MCF 10A (cell line): ENCODE measurements at regions of chr7 and their contacts with region 1.

Region 1: DNA sequence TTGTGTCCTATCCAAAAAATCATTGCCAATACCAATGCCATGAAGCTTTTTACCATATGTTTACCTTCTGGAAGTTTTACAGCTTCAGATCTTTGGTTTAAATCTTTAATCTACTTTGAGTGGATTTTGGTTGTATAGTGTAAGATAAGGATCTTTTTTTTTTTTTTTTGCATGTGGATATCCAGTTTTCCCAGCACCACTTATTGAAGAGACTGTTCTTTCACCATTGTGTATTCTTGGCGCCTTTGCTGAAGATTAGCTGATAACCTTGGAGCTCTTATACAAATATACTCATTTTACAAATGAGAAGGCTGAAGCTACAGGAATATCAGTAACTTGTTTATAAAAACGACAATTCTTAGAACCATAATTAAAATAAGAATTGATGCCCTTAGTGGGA is 125.8 kb downstream of the BBS9 start:
- DNase-seq: no peak
- H3K4me3 Mint-ChIP-seq: no peak overlapping the region
- H3K27ac Mint-ChIP-seq: no peak overlapping the region
- H3K4me1 Mint-ChIP-seq: no peaks in the 10 kb centered on the region
- H3K27me3 Mint-ChIP-seq: no peaks in the 10 kb centered on the region
- CTCF ChIP-seq: no peak

Region 2: DNA sequence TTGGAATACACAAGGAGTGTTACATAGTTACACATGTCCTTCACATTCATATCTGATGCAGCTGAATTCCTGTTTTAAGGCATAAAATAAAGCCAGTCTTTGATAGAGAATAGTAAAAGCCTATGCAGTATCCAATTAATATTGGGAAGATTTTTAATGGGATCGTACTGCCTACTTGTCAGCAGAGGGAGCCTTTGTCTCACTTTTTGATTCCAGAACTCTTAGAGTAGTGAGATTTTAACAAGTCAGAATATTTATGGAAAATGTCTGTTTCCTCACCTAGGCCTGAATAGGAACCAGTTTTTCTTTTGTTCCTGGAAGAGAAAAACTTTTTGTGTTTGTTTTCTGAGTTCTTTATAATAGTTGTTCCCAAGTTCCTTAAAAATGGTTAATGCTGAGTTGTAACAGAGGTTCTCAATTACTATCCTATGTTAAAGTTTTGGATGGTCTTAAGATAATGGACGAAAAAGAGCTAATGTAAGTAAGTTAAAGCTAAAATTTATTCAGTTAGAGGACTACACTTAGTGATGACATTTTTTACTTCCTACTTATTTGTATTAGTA is 11.8 kb before region 1 on chr7:
- CTCF ChIA-PET with region 1: interaction called, 11 read pairs
- POLR2A ChIA-PET with region 1: no interaction called
- intact Hi-C with region 1: no loop called
- DNase-seq: peak; percentile 57
- H3K4me3 Mint-ChIP-seq: no peak overlapping the region
- H3K27ac Mint-ChIP-seq: no peak overlapping the region
- H3K4me1 Mint-ChIP-seq: no peaks in the 10 kb centered on the region
- H3K27me3 Mint-ChIP-seq: no peaks in the 10 kb centered on the region
- CTCF ChIP-seq: peak; percentile 58